Right cardiac atrium (tissue), 5 donors: ENCODE measurements at regions of chr22 and their contacts with region 1.

Region 1: DNA sequence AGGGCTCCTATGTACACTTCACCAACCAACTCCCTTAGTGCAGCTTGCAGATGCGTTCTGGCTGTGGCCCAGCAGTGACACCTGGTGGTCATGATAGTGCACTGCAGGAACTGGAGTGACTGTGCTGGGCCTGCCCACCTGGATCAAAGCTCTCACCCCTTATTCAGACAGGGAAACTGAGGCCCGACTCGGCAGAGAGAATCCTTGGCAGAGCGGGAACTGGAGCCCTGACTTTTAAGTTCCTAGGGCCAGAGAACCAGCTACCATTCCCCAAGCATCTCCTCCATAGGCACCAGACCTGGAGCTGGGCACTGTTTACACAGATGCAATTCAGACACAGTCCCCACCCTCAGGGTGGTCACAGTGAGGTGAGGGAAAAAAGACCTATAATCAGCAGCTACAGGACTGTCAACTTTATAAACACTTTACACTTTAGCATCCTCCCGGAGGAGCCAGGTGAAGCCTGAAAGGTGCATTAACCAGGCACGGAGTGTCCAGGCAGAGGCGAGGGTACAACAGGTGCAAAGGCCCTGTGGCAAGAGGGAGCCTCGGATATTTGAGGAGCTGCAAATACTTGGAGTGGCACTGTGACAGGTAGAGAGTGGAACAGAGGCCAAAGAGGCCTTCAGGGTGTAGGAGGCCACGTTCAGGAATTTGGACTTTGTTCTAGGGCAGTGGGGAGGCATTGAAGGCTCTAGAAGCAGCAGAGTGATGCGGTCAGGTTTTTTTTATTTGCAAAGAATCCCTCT is 22.0 kb downstream of the RHBDD3 start:
- DNase-seq: peak; percentile 64 to 86 (median 83)
- ATAC-seq: peak; percentile 81 to 87
- H3K4me3 ChIP-seq: no peak overlapping the region
- H3K27ac ChIP-seq: no peak overlapping the region
- H3K4me1 ChIP-seq: no peaks in the 10 kb centered on the region
- H3K27me3 ChIP-seq: no peaks in the 10 kb centered on the region

Region 2: GRCh38 chr22:28600546-28601143 is 645.2 kb before region 1 on chr22:
- intact Hi-C with region 1: loop called in 1 of 4 experiments (anchors 10 kb)
- DNase-seq: no peak
- ATAC-seq: peak; percentile 16 to 28
- H3K4me3 ChIP-seq: no peak overlapping the region
- H3K27ac ChIP-seq: no peak overlapping the region
- H3K4me1 ChIP-seq: no peaks in the 10 kb centered on the region
- H3K27me3 ChIP-seq: no peaks in the 10 kb centered on the region

Region 3: DNA sequence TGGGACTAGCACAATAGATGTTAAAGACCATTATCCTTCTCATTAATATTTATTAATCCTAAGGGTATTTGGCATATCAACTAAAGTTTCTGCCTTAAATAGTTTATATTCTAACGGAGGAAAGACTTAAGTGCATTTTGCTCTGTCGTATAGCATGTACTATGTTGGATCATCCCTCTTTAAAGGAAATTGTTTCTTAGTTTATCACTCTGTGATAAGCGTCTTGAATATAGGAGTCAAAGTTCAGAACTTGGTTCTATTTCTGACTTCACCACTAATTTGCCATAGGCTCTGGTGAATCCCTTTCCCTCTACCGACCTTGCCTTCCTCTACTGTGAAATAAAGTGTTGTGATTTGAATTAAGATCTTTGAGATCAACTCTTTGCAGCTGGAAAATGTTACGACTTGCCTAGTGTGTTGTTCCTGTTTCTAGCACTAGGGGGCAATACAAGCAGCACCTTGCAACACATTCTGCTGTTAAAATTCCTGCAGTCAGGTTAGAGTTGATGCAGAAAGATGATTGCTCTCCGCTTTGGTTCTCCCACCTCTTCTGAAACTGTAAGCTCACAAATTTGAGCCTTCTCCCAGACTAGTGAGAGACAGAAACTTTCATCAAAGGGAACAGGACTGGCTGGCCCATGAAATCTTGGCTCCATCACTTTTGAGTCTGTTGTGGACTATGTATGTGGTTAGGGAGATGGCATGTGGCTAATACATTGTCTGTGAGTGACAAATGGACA is 390.3 kb before region 1 on chr22:
- intact Hi-C with region 1: loop called in 2 of 4 experiments (anchors 10 kb)
- DNase-seq: no peak
- ATAC-seq: peak; percentile 66 to 67
- H3K4me3 ChIP-seq: no peak overlapping the region
- H3K27ac ChIP-seq: no peak overlapping the region
- H3K4me1 ChIP-seq: no peaks in the 10 kb centered on the region
- H3K27me3 ChIP-seq: no peaks in the 10 kb centered on the region

Region 4: DNA sequence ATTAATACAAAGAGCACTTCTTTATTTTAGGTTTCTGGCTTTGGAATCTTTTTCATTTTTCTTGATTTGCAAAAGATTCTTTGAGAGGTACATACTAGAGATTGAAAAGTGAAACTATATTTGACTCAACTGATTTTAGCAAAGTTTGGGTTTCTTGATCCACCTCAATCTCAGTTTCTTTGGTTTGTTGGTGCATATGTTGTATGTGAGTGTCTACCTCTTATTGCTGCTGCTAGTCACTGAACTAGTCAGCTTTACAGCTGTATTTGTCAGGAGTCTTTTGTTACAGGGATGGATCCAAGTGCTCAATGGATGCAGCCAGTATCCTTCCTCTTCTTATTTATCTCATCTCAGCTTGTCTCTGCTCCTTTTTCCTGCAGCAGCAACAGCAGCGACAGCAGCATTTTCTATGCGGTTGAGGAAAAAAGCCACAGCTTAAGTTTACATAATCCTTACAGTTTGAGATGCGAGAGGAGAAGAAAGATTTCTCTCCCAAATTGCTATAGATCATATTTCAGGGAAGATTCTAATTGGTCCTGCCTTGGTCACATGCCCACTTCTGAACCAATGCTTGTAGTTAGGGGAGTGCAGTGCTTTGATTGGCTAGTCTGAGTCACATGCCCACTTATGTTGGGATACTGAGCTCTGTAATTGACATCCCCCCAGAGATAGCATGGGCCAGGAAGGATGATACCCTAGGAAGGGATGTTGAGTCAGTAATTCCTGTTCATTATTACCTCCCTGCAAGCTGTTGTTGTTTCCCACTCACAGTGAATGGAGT is 372.4 kb before region 1 on chr22:
- intact Hi-C with region 1: no loop called
- DNase-seq: no peak
- ATAC-seq: no peak
- H3K4me3 ChIP-seq: no peak overlapping the region
- H3K27ac ChIP-seq: no peak overlapping the region
- H3K4me1 ChIP-seq: no peaks in the 10 kb centered on the region
- H3K27me3 ChIP-seq: no peaks in the 10 kb centered on the region

Region 5: GRCh38 chr22:29040385-29041275 is 205.2 kb before region 1 on chr22:
- intact Hi-C with region 1: loop called in 1 of 4 experiments (anchors 10 kb)
- DNase-seq: peak in 2 of 3 donors; percentile 53 to 81
- ATAC-seq: peak; percentile 87
- H3K4me3 ChIP-seq: no peak overlapping the region
- H3K27ac ChIP-seq: no peak overlapping the region
- H3K4me1 ChIP-seq: no peaks in the 10 kb centered on the region
- H3K27me3 ChIP-seq: no peaks in the 10 kb centered on the region

Region 6: DNA sequence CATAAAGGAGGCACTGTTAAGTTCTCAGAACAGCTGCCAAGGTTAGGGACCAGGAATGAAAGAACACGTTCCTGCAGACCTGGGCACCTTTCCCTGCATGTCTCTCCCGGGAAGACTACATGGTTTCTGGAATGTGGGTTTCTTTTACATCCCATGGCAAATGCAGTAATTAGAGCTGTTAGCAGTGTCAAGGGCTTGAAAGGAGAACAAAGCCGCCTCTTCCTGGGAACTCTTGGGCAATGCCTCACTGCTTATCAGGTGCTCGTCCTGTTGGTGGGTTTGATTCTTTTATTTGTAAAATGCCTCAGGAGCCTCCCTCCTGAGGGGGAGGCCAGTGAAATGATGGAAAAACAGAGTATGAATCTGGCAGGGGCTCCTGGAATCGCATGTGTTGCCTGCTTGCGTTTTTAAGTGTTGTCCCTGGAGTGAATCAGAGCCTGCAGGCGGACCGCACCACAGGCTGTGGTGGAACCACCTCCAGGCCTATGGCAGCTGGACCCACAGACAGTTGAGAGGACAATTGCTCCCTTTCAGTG is 183.5 kb before region 1 on chr22:
- intact Hi-C with region 1: loop called in 1 of 4 experiments (anchors 10 kb)
- DNase-seq: peak in 1 of 3 donors; percentile 22
- ATAC-seq: peak in 1 of 2 donors; percentile 54
- H3K4me3 ChIP-seq: no peak overlapping the region
- H3K27ac ChIP-seq: no peak overlapping the region
- H3K4me1 ChIP-seq: no peaks in the 10 kb centered on the region
- H3K27me3 ChIP-seq: no peaks in the 10 kb centered on the region

Region 7: GRCh38 chr22:29154364-29155048 is 91.3 kb before region 1 on chr22:
- intact Hi-C with region 1: loop called in 2 of 4 experiments (anchors 10 kb)
- DNase-seq: peak; percentile 74 to 92 (median 87)
- ATAC-seq: peak; percentile 69 to 70
- H3K4me3 ChIP-seq: peak overlapping the region; percentile 7
- H3K27ac ChIP-seq: no peak overlapping the region
- H3K4me1 ChIP-seq: peaks cover 5% of the 10 kb centered on the region
- H3K27me3 ChIP-seq: no peaks in the 10 kb centered on the region

Region 8: DNA sequence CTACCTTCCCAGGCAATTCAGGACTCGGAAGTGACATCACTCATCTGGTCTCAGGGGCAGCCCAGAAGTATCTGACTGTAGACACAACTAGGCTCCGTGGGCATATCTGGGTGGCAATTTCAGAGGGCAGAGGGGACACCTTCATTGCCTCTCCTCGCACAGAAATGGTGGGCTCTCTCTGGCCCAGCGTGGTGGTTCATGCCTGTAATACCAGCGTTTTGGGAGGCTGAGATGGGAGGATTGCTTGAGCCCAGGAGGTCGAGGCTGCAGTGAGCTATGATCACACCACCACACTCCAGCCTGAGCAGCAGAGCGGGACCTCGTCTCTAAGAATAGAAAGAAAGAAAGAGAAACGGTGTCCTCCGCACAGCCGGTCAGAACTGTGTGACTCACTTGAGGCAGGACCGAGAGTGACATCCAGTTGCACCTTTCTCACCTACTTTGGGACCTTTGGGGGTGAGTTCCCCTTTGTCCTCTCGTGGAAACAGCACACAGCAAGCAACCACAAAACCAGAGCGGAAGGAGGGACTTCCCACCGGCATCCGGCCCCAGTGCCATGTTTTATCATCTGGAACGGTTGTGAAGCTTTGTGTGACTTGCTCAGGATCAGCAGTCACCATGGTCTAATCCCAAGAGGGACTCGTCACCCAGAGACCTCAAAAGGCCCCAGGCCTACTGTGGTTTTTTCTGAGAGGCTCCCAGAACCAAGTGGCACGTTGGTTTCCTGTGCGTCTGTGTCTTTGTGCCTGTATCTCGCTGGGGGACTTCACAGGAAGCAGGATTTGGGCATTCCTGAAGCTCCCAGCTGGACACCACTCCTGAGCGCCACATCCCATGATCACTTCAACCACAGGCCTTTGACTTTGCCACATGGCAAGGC is 78.5 kb before region 1 on chr22:
- intact Hi-C with region 1: no loop called
- DNase-seq: no peak
- ATAC-seq: no peak
- H3K4me3 ChIP-seq: no peak overlapping the region
- H3K27ac ChIP-seq: no peak overlapping the region
- H3K4me1 ChIP-seq: no peaks in the 10 kb centered on the region
- H3K27me3 ChIP-seq: no peaks in the 10 kb centered on the region

Region 9: DNA sequence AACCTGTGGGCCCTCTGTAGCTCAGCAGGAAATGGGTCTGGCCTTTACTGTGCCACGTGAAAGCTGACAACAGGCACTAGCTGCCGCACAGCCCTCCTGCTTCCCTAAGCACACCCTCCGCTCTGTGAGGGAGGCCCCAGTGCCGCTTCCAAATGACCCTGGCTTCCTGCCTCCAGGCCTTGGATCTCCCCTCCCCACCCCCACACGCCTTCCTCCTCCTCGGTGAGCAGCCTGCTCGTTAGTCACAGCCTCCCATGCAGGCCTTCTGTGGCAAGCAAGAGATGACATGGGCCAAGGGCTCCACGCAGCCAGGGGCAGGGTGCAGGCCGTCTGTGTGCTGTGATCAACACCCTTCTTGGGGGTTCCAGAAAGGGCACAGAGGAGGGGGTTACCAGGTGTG is 84.9 kb after region 1 on chr22:
- intact Hi-C with region 1: no loop called
- DNase-seq: peak; percentile 77 to 86 (median 83)
- ATAC-seq: peak; percentile 37 to 71
- H3K4me3 ChIP-seq: no peak overlapping the region
- H3K27ac ChIP-seq: no peak overlapping the region
- H3K4me1 ChIP-seq: peaks cover 2% of the 10 kb centered on the region
- H3K27me3 ChIP-seq: no peaks in the 10 kb centered on the region